ENCODE measurements at regions of chr13 and their contacts with region 1.

Region 1: DNA sequence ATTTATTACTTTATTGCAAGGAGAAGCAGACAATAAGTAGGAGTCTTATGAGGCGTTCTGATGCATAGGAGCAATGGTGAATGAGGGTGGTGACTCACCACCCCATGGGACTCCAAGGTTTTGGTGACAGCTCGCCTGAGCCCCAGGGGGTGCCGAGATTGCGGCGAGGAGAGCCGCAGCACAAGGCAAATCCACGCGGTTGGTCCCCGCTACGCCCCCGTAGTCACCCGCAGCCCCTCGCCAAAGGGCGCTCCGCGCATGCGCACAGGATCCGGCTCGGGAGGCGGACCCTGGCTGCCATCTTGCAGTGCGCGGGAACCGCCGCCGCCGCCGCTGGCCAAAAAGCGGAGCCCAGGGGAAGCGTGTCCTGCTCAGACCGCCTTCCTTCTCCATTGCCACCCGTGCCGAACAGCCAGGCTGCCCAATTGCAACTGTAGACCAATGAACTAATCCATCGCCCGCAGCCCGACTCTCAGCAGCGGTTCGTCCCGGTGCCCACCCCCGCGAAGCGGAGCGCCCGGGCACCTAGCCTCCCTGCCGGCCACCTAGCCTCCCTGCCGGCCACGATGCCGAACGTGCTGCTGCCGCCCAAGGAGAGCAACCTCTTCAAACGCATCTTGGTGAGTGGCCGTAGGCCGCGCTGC is at the start of gene NAA16:
- DNase-seq: peak; percentile 86
- H3K4me3 ChIP-seq: peak within 1 kb of the TSS; percentile 66 to 100 (median 94)
- H3K27ac ChIP-seq: peak within 1 kb of the TSS; percentile 86
- H3K4me1 ChIP-seq: peaks cover 24% of the 10 kb centered on the region
- H3K27me3 ChIP-seq: no peaks in the 10 kb centered on the region
- CTCF ChIP-seq: no peak
- total RNA-seq, gene NAA16: 8.7 to 17.8 TPM

Region 2: GRCh38 chr13:41132512-41133152 is 178.5 kb before region 1 on chr13 and contains the start of gene KBTBD6:
- CTCF ChIA-PET with region 1: no interaction called
- dilution Hi-C with region 1: no loop called
- in situ Hi-C with region 1: no loop called
- intact Hi-C with region 1: loop called (anchors 10 kb)
- DNase-seq: peak; percentile 100
- H3K4me3 ChIP-seq: peak within 1 kb of the TSS; percentile 76 to 93 (median 77)
- H3K27ac ChIP-seq: peak within 1 kb of the TSS; percentile 97
- H3K4me1 ChIP-seq: peaks cover 23% of the 10 kb centered on the region
- H3K27me3 ChIP-seq: no peaks in the 10 kb centered on the region
- CTCF ChIP-seq: no peak
- total RNA-seq, gene KBTBD6: 8.2 to 11.2 TPM

Region 3: GRCh38 chr13:41263261-41264027 is 47.6 kb before region 1 on chr13 and contains the start of gene MTRF1:
- CTCF ChIA-PET with region 1: no interaction called
- dilution Hi-C with region 1: loop called (anchors 5 kb)
- in situ Hi-C with region 1: no loop called
- intact Hi-C with region 1: loop called (anchors 2 kb)
- DNase-seq: peak; percentile 82
- H3K4me3 ChIP-seq: peak within 1 kb of the TSS; percentile 72 to 81 (median 80)
- H3K27ac ChIP-seq: peak within 1 kb of the TSS; percentile 79
- H3K4me1 ChIP-seq: peaks cover 24% of the 10 kb centered on the region
- H3K27me3 ChIP-seq: no peaks in the 10 kb centered on the region
- CTCF ChIP-seq: no peak
- total RNA-seq, gene MTRF1: 8.7 to 12.7 TPM

Region 4: DNA sequence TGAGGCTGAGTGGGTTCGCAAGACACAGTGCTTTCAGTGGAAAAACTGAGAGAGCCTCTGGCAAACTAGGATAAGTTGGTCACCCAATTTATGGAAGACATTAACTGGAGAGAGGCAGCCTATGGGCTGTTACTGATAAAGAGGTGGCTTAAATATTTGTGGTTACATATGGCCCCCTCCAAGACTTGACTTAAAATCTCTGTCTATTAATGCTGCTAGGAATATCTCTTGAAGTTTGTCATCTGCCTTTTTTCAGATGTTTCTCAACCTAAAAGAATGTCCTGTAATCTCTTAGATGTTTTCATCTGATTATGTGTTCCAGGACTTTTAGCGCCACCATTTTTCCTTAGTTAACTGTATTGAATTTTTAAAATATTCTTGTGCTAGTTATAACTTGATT is 54.5 kb after region 1 on chr13:
- CTCF ChIA-PET with region 1: no interaction called
- dilution Hi-C with region 1: loop called (anchors 5 kb)
- in situ Hi-C with region 1: no loop called
- intact Hi-C with region 1: no loop called
- DNase-seq: no peak
- H3K4me3 ChIP-seq: no peak overlapping the region
- H3K27ac ChIP-seq: no peak overlapping the region
- H3K4me1 ChIP-seq: no peaks in the 10 kb centered on the region
- H3K27me3 ChIP-seq: no peaks in the 10 kb centered on the region
- CTCF ChIP-seq: no peak

Measured in mammary epithelial cell (primary cell).